ENCODE measurements at regions of chr3 and their contacts with region 1.

Region 1: GRCh38 chr3:8987645-8988383 is 24.5 kb upstream of the RAD18 start:
- DNase-seq: peak; percentile 90

Region 2: GRCh38 chr3:8421267-8421666 is 566.5 kb before region 1 on chr3:
- intact Hi-C with region 1: no loop called
- DNase-seq: no peak

Region 3: GRCh38 chr3:8945890-8946600 is 41.8 kb before region 1 on chr3:
- intact Hi-C with region 1: no loop called
- DNase-seq: no peak

Region 4: DNA sequence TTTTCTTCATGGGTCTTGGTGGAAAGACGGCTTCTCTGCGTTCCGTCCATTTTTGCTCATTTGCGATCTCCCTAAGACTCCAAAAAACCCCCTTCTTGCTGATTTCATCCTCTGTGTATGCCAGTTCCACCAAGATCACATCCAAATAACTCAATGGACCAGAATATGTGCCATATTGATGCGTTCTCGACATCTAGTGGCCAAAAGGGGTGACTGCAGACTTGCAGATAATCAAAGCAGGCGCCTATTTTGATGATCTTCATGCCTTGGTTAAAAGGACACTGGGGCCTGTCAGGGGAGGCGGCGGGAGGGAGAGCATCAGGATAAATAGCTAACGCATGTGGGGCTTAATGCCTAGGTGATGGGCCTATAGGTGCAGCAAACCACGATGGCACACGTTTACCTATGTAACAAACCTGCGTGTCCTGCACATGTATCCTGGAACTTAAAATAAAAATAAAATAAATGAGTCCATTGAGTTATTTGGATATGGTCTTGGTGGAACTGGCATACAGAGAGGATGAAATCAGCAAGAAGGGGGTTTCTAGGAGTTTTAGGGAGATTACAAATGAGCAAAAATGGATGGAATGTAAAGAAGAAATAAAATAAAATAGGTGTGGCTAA is 79.7 kb after region 1 on chr3:
- intact Hi-C with region 1: loop called (anchors 5 to 10 kb)
- DNase-seq: no peak

Region 5: GRCh38 chr3:9308298-9308990 is 320.6 kb after region 1 on chr3:
- intact Hi-C with region 1: loop called in 1 of 2 experiments (anchors 5 kb)
- DNase-seq: no peak